Activated CD4-positive, alpha-beta T cell treated with anti-CD3 and anti-CD28 coated beads, Interleukin-2, amount 10 ng/mL, durations not matched to agents 7 days and 5 days (primary cell): ENCODE measurements at regions of chr21 and their contacts with region 1.

Region 1: DNA sequence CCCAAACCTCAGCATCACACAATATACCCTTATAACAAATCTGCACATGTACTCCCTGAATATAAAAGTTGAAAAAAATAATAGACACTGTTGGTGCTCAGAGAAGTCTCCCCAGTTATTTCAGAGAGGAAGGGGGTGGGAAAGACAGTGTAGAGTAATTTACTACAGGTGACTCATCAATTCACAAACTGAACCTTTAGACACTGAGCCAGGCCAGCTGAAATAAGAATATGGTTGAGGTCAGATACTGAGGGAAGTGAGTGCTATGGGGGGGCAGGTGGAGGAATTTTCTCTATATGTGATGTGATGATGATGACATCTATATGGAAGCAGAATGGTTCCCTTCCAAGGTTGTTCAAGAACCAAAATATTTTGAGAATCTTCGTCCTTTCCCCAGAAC is 50.1 kb downstream of the MRPL39 start:
- DNase-seq: no peak
- H3K4me3 Mint-ChIP-seq: no peak overlapping the region
- H3K27ac Mint-ChIP-seq: no peak overlapping the region
- H3K4me1 Mint-ChIP-seq: peaks cover 31% of the 10 kb centered on the region
- H3K27me3 Mint-ChIP-seq: no peaks in the 10 kb centered on the region

Region 2: GRCh38 chr21:25133939-25134338 is 423.2 kb before region 1 on chr21:
- CTCF ChIA-PET with region 1: no interaction called
- POLR2A ChIA-PET with region 1: no interaction called
- DNase-seq: no peak
- H3K4me3 Mint-ChIP-seq: no peak overlapping the region
- H3K27ac Mint-ChIP-seq: no peak overlapping the region
- H3K4me1 Mint-ChIP-seq: no peaks in the 10 kb centered on the region
- H3K27me3 Mint-ChIP-seq: no peaks in the 10 kb centered on the region

Region 3: GRCh38 chr21:25573409-25574206 is 16.4 kb after region 1 on chr21:
- CTCF ChIA-PET with region 1: no interaction called
- POLR2A ChIA-PET with region 1: interaction called, 12 read pairs
- DNase-seq: peak; percentile 59
- H3K4me3 Mint-ChIP-seq: peak overlapping the region; percentile 72
- H3K27ac Mint-ChIP-seq: peak overlapping the region; percentile 95
- H3K4me1 Mint-ChIP-seq: peaks cover 77% of the 10 kb centered on the region
- H3K27me3 Mint-ChIP-seq: no peaks in the 10 kb centered on the region

Region 4: DNA sequence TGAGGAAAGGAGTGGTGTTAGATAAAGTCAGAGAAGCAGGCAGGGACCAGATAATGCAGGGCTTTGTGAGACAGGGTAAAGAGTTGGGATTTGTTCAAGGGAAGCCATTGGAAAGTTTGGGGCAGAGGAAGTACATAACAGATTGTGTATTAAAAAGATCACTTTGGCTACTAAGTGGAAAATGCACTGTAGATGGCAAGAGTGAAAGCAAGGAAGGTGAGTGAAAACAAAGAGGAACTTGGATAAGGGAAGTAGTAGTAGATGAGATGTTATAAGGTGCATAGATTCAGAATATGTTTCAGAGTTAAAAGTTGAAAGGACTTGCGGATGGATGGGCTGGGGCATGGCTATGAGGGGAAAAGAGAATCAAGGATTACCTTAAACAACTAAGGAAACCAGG is 32.7 kb after region 1 on chr21:
- CTCF ChIA-PET with region 1: no interaction called
- POLR2A ChIA-PET with region 1: no interaction called
- DNase-seq: no peak
- H3K4me3 Mint-ChIP-seq: no peak overlapping the region
- H3K27ac Mint-ChIP-seq: no peak overlapping the region
- H3K4me1 Mint-ChIP-seq: peaks cover 12% of the 10 kb centered on the region
- H3K27me3 Mint-ChIP-seq: no peaks in the 10 kb centered on the region

Region 5: GRCh38 chr21:25607151-25608043 is 50.2 kb after region 1 on chr21 and contains the start of gene MRPL39:
- CTCF ChIA-PET with region 1: no interaction called
- POLR2A ChIA-PET with region 1: no interaction called
- DNase-seq: peak; percentile 91
- H3K4me3 Mint-ChIP-seq: peak within 1 kb of the TSS; percentile 100
- H3K27ac Mint-ChIP-seq: peak within 1 kb of the TSS; percentile 100
- H3K4me1 Mint-ChIP-seq: peaks cover 39% of the 10 kb centered on the region
- H3K27me3 Mint-ChIP-seq: no peaks in the 10 kb centered on the region
- total RNA-seq, gene MRPL39: 36.0 to 36.1 TPM